Activated CD4-positive, alpha-beta memory T cell treated with anti-CD3 and anti-CD28 coated beads, Interleukin-2, amount 10 ng/mL, durations not matched to agents 7 days and 5 days (primary cell): ENCODE measurements at regions of chr19 and their contacts with region 1.

Region 1: GRCh38 chr19:33186431-33187182 is 7.5 kb upstream of the LRP3 start:
- DNase-seq: no peak
- H3K4me3 Mint-ChIP-seq: no peak overlapping the region
- H3K27ac Mint-ChIP-seq: no peak overlapping the region
- H3K4me1 Mint-ChIP-seq: no peaks in the 10 kb centered on the region
- H3K27me3 Mint-ChIP-seq: peaks cover 10% of the 10 kb centered on the region

Region 2: DNA sequence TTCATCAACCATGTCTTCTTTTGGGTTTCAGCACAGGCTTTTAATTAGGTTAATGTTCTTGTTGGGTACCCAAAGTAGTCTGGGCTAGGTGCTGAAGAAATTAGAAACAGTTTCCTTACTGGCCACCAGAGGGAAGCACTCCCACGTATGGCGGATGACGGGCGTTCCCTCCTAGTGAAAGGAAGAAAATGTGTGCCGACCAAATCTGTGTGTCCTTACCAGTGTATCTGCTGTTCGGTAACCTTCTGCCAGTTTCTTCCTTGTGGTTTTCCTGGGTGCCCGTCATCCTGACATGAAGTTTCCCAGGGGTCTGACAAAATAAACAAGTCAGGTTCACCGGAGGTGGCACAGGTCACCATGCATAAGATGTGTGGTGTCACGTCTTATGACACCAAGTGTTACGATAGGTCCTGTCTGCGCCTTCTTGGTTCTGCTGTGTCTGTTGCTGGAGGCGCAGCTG is 60.6 kb before region 1 on chr19:
- CTCF ChIA-PET with region 1: interaction called, 18 read pairs
- POLR2A ChIA-PET with region 1: no interaction called
- DNase-seq: peak; percentile 60
- H3K4me3 Mint-ChIP-seq: no peak overlapping the region
- H3K27ac Mint-ChIP-seq: no peak overlapping the region
- H3K4me1 Mint-ChIP-seq: peaks cover 5% of the 10 kb centered on the region
- H3K27me3 Mint-ChIP-seq: no peaks in the 10 kb centered on the region

Region 3: DNA sequence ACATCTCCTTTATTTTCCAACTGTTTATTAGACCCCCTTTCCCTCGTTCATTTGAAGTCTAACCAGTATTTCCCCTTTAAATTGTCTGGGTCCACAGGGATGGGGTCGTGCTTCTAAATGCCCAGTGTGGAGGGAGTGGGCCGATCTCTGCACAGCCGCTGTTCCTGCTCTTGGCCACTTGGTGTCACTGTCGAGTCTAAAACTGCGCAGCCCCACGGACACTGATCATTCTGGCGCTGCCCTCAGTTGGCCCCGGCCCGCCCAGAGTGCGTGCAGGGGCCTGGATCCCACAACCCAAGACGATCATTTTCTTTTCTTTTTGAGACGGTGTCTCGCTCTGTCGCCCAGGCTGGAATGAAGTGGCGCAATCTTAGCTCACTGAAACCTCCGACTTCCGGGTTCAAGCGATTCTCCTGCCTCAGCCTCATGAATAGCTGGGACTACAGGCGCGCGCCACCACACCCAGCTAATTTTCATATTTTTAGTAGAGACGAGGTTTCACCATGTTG is 42.7 kb before region 1 on chr19:
- CTCF ChIA-PET with region 1: interaction called, 44 read pairs
- POLR2A ChIA-PET with region 1: no interaction called
- DNase-seq: peak; percentile 66
- H3K4me3 Mint-ChIP-seq: no peak overlapping the region
- H3K27ac Mint-ChIP-seq: no peak overlapping the region
- H3K4me1 Mint-ChIP-seq: peaks cover 5% of the 10 kb centered on the region
- H3K27me3 Mint-ChIP-seq: peaks cover 5% of the 10 kb centered on the region

Region 4: GRCh38 chr19:33156334-33156733 is 30.3 kb before region 1 on chr19:
- CTCF ChIA-PET with region 1: interaction called, 32 read pairs
- POLR2A ChIA-PET with region 1: interaction called, 3 read pairs
- DNase-seq: no peak
- H3K4me3 Mint-ChIP-seq: no peak overlapping the region
- H3K27ac Mint-ChIP-seq: no peak overlapping the region
- H3K4me1 Mint-ChIP-seq: peaks cover 33% of the 10 kb centered on the region
- H3K27me3 Mint-ChIP-seq: peaks cover 2% of the 10 kb centered on the region